Psoas muscle (tissue), 8 donors: ENCODE measurements at regions of chr19 and their contacts with region 1.

Region 1: DNA sequence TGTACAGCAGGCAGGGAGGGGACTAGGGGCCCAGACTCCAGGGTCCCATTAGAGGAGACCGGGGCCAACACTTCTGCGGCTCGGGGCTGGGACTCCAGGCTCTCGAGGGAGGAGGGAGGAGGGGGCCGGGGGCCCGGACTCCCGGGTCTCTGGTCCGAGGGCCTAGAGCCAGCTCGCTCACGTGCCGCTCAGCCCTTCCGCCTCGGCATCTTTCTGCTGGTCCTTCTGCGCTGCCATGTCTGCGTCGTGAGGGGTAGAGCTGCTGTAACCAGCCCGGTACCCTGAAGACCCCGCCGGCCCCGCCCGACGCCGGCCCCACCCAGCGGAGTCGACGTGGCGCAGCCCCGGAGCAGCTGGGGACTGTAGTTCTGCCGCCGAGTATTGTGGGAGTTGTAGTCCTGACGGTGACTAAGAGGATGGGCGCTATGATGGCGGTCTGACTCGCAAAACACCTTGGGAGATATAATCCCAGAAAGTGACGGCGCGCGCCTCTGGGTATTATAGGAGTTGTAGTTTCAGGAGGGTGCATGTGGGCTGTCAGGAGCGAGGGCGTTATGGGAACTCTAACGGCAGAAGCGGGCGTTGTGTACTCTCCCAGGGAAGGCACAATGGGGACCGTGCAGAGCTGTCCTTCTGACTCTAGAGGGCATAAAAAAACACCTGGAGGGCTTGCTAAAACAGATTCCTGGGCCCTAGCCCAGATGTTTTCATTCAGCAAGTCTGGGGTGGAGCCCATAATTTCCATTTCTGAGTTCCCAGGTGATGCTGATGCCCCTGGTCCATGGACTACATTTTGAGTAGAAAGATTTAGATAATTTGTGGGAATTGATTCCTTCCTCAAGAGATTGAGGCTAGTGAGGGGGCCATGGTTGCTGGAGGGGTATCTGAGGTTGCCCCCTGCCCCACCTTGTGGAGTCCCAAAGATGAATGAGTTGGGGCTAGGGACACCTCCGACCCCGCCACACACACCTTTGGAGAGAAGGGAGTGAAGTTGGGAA is at the start of gene RABAC1:
- DNase-seq: peak; percentile 86 to 92
- ATAC-seq: peak; percentile 91 to 98 (median 96)
- H3K4me3 ChIP-seq: peak within 1 kb of the TSS; percentile 92
- H3K27ac ChIP-seq: peak within 1 kb of the TSS; percentile 78
- H3K4me1 ChIP-seq: peaks cover 16% of the 10 kb centered on the region
- H3K27me3 ChIP-seq: no peaks in the 10 kb centered on the region
- CTCF ChIP-seq: no peak
- total RNA-seq, gene RABAC1: 48.9 to 65.3 (median 55.9) TPM

Region 2: DNA sequence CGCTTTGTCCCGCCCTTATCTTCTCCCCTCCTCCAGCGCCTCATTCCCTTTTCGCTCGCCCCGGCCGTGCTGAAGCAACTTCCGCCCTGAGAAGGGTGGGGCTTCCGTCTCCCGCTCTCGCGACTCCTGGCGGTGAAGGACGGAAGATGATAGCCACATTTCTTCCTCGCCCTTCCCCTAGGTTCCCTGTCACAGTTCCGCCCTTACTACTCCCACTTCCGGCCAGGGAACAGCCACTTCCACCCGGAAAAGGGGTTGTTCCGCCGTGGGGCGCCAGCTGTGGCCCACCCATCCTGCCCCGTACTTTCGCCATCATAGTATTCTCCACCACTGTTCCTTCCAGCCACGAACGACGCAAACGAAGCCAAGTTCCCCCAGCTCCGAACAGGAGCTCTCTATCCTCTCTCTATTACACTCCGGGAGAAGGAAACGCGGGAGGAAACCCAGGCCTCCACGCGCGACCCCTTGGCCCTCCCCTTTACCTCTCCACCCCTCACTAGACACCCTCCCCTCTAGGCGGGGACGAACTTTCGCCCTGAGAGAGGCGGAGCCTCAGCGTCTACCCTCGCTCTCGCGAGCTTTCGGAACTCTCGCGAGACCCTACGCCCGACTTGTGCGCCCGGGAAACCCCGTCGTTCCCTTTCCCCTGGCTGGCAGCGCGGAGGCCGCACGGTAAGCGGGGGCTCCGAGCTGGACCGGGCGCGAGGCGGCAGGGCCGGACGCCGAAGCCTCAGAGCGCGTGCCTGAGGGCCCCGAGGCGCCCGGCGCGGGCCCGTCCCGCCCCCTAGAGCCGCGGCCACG is 99.5 kb before region 1 on chr19 and contains the start of gene RPS19:
- intact Hi-C with region 1: loop called (anchors 5 kb)
- DNase-seq: peak; percentile 98 to 99
- ATAC-seq: peak; percentile 94 to 97 (median 94)
- H3K4me3 ChIP-seq: peak within 1 kb of the TSS; percentile 94
- H3K27ac ChIP-seq: peak within 1 kb of the TSS; percentile 93
- H3K4me1 ChIP-seq: peaks cover 19% of the 10 kb centered on the region
- H3K27me3 ChIP-seq: peaks cover 0 to 3% (median 0%) of the 10 kb centered on the region in 3 donors
- CTCF ChIP-seq: peak; percentile 60
- total RNA-seq, gene RPS19: 593 to 962 (median 730) TPM

Region 3: GRCh38 chr19:41883821-41884733 is 75.3 kb before region 1 on chr19:
- intact Hi-C with region 1: loop called in 1 of 2 experiments (anchors 5 kb)
- DNase-seq: peak; percentile 95 to 97
- ATAC-seq: peak; percentile 98 to 99 (median 98)
- H3K4me3 ChIP-seq: peak overlapping the region; percentile 74
- H3K27ac ChIP-seq: peak overlapping the region; percentile 67
- H3K4me1 ChIP-seq: peaks cover 6% of the 10 kb centered on the region
- H3K27me3 ChIP-seq: peaks cover 0 to 8% (median 0%) of the 10 kb centered on the region in 3 donors
- CTCF ChIP-seq: peak; percentile 16